HEK293T (cell line): ENCODE measurements at regions of chr3 and their contacts with region 1.

Region 1: GRCh38 chr3:130480736-130481135 is 36.2 kb upstream of the COL6A6 start:
- DNase-seq: peak; percentile 72

Region 2: GRCh38 chr3:130491424-130491823 is 10.7 kb after region 1 on chr3:
- CTCF ChIA-PET with region 1: interaction called, 11 read pairs
- POLR2A ChIA-PET with region 1: no interaction called
- DNase-seq: peak; percentile 10

Region 3: GRCh38 chr3:130582457-130583153 is 101.9 kb after region 1 on chr3:
- CTCF ChIA-PET with region 1: no interaction called
- POLR2A ChIA-PET with region 1: no interaction called
- DNase-seq: no peak